ENCODE measurements at regions of chr7 and their contacts with region 1.

Region 1: GRCh38 chr7:37181550-37181932 is 267.1 kb downstream of the ELMO1 start:
- DNase-seq: no peak
- ATAC-seq: peak in 1 of 4 donors; percentile 13
- H3K4me3 ChIP-seq: no peak overlapping the region
- H3K27ac ChIP-seq: no peak overlapping the region
- H3K4me1 ChIP-seq: no peaks in the 10 kb centered on the region
- H3K27me3 ChIP-seq: no peaks in the 10 kb centered on the region
- CTCF ChIP-seq: no peak

Region 2: DNA sequence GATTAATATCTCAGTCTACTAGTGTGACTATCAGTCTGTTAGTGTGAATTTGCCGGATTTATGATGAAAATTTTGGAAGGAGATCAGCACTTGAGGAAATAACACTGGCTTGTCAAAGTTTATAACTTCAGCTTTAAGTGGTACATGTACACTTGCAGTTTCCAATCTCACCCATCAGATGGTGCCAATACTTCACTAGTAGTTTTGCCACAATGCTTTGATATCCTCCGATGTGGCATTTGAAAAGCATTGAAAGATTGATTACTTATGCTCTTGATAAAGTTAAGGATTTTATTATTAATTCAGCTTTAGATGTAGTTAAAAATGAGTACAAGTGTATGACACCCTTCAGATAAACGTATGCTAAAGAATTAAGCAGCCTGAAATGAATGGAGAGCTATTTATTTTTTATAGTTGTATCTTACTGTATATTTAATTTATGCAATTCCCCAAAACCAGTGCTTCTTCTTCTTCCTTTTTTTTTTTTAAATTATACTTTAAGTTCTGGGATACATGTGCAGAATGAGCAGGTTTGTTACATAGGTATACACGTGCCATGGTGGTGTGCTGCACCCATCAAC is 693.7 kb before region 1 on chr7:
- intact Hi-C with region 1: loop called in 1 of 2 experiments (anchors 5 kb)
- DNase-seq: no peak
- ATAC-seq: peak in 1 of 4 donors; percentile 49
- H3K4me3 ChIP-seq: no peak overlapping the region
- H3K27ac ChIP-seq: no peak overlapping the region
- H3K4me1 ChIP-seq: no peaks in the 10 kb centered on the region
- H3K27me3 ChIP-seq: no peaks in the 10 kb centered on the region
- CTCF ChIP-seq: peak; percentile 58

Region 3: GRCh38 chr7:36967387-36967786 is 214.2 kb before region 1 on chr7:
- intact Hi-C with region 1: loop called (anchors 5 kb)
- DNase-seq: peak in 1 of 2 donors; percentile 36
- ATAC-seq: peak; percentile 75 to 93 (median 85)
- H3K4me3 ChIP-seq: no peak overlapping the region
- H3K27ac ChIP-seq: no peak overlapping the region
- H3K4me1 ChIP-seq: peaks cover 3% of the 10 kb centered on the region
- H3K27me3 ChIP-seq: no peaks in the 10 kb centered on the region
- CTCF ChIP-seq: peak; percentile 81

Region 4: GRCh38 chr7:36986429-36987362 is 194.8 kb before region 1 on chr7:
- intact Hi-C with region 1: loop called (anchors 5 kb)
- DNase-seq: peak; percentile 48 to 64
- ATAC-seq: peak in 3 of 4 donors; percentile 67 to 75 (median 72)
- H3K4me3 ChIP-seq: no peak overlapping the region
- H3K27ac ChIP-seq: no peak overlapping the region
- H3K4me1 ChIP-seq: no peaks in the 10 kb centered on the region
- H3K27me3 ChIP-seq: peaks cover 0 to 3% (median 0%) of the 10 kb centered on the region in 3 donors
- CTCF ChIP-seq: peak; percentile 68